ENCODE measurements at regions of chr6 and their contacts with region 1.

Region 1: DNA sequence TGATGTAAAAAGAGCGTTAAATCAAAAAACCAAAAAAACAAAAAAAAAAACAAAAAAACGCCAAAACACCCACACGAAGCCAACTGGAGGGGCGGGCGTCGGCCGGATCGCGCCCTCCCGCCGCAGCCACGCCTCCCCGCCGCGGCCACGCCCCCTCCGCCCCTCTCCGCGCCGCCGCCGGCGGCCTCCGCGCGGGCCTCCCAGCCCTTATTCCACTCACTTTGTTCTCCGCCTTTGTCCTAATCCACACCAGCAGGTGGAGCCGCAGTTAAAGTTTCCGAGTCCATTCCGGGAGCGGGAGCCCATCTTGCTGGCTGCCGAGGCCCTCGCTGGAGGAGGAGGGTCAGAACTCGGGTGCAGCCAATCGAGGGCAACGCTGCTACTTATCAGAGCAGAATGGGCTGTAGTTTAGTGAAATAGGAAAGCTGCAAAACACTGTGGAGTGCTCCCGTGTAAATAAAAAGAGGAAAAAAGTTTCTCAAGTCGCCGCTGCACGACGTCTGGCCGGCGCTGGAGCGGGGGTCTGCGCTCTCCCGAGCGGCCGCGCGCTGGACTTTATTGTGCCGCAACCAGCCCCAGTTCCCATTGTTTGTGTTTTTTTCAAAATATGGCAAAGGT is at the start of gene ASF1A:
- DNase-seq: peak; percentile 98
- H3K4me3 ChIP-seq: peak within 1 kb of the TSS; percentile 64 to 99 (median 87)
- H3K27ac ChIP-seq: peak within 1 kb of the TSS; percentile 91
- H3K4me1 ChIP-seq: peaks cover 18% of the 10 kb centered on the region
- H3K27me3 ChIP-seq: no peaks in the 10 kb centered on the region
- CTCF ChIP-seq: peak; percentile 65 to 69
- POLR2A ChIP-seq: peak; percentile 89
- total RNA-seq, gene ASF1A: 38.4 TPM in 2 replicates

Region 2: GRCh38 chr6:117498159-117498558 is 1395.8 kb before region 1 on chr6:
- CTCF ChIA-PET with region 1: no interaction called
- POLR2A ChIA-PET with region 1: no interaction called
- dilution Hi-C with region 1: no loop called
- intact Hi-C with region 1: loop called (anchors 10 kb)
- DNase-seq: peak; percentile 88
- H3K4me3 ChIP-seq: no peak overlapping the region
- H3K27ac ChIP-seq: peak overlapping the region; percentile 99
- H3K4me1 ChIP-seq: peaks cover 74% of the 10 kb centered on the region
- H3K27me3 ChIP-seq: no peaks in the 10 kb centered on the region
- CTCF ChIP-seq: no peak
- POLR2A ChIP-seq: peak; percentile 51

Region 3: GRCh38 chr6:118228886-118229285 is 665.0 kb before region 1 on chr6:
- CTCF ChIA-PET with region 1: no interaction called
- POLR2A ChIA-PET with region 1: no interaction called
- dilution Hi-C with region 1: no loop called
- intact Hi-C with region 1: no loop called
- DNase-seq: no peak
- H3K4me3 ChIP-seq: no peak overlapping the region
- H3K27ac ChIP-seq: no peak overlapping the region
- H3K4me1 ChIP-seq: no peaks in the 10 kb centered on the region
- H3K27me3 ChIP-seq: no peaks in the 10 kb centered on the region
- CTCF ChIP-seq: no peak
- POLR2A ChIP-seq: no peak

Region 4: GRCh38 chr6:118651282-118652050 is 242.4 kb before region 1 on chr6 and contains the start of gene CEP85L:
- CTCF ChIA-PET with region 1: interaction called, 4 read pairs
- POLR2A ChIA-PET with region 1: no interaction called
- dilution Hi-C with region 1: no loop called
- intact Hi-C with region 1: loop called (anchors 2 kb)
- DNase-seq: peak; percentile 90
- H3K4me3 ChIP-seq: peak within 1 kb of the TSS; percentile 57 to 98 (median 93)
- H3K27ac ChIP-seq: peak within 1 kb of the TSS; percentile 95
- H3K4me1 ChIP-seq: peaks cover 21% of the 10 kb centered on the region
- H3K27me3 ChIP-seq: no peaks in the 10 kb centered on the region
- CTCF ChIP-seq: no peak
- POLR2A ChIP-seq: peak; percentile 84
- total RNA-seq, gene CEP85L: 9.2 and 12.0 TPM in 2 replicates

Region 5: GRCh38 chr6:118709859-118710350 is 184.0 kb before region 1 on chr6:
- CTCF ChIA-PET with region 1: no interaction called
- POLR2A ChIA-PET with region 1: no interaction called
- dilution Hi-C with region 1: no loop called
- intact Hi-C with region 1: loop called (anchors 1 kb)
- DNase-seq: no peak
- H3K4me3 ChIP-seq: peak overlapping the region in 2 of 3 experiments; percentile 7 to 31
- H3K27ac ChIP-seq: peak overlapping the region; percentile 93
- H3K4me1 ChIP-seq: peaks cover 27% of the 10 kb centered on the region
- H3K27me3 ChIP-seq: no peaks in the 10 kb centered on the region
- CTCF ChIP-seq: no peak
- POLR2A ChIP-seq: no peak

Region 6: DNA sequence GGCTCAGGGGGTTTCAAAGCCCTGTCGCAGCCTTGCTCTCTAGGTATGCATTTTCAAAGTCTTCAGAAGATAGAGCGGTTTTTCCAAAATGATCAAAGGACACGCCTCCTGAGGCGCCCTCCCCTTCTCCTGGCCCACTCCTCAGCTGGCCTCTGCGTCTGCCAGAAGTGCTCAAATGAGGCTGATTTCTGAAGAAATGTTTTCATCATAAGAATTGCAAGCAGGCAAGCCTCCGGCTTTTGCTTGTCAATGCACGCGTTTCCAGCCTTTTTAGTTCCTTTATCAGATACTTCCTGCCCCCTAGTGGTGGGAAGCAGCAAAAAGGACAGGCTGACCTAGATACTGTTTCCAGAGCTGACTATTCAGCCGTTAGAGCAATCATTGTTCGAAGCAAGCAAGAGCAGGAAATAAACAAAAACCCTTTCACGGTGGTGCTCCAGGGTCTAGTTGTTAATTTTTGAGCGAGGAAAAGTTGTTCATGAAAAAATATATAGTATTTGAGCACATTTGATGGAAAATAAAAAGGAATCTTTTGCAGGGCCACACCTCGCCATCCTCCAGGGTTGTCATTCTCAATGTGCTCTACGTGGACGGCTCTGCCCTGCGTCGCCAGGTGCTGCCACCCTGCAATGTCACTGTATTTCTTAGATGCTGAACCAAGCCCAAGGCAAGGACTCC is 93.4 kb before region 1 on chr6:
- CTCF ChIA-PET with region 1: interaction called, 9 read pairs
- POLR2A ChIA-PET with region 1: no interaction called
- dilution Hi-C with region 1: no loop called
- intact Hi-C with region 1: loop called (anchors 2 kb)
- DNase-seq: peak; percentile 76
- H3K4me3 ChIP-seq: no peak overlapping the region
- H3K27ac ChIP-seq: no peak overlapping the region
- H3K4me1 ChIP-seq: no peaks in the 10 kb centered on the region
- H3K27me3 ChIP-seq: no peaks in the 10 kb centered on the region
- CTCF ChIP-seq: peak; percentile 83 to 86
- POLR2A ChIP-seq: no peak

Region 7: GRCh38 chr6:118843685-118844390 is 50.1 kb before region 1 on chr6:
- CTCF ChIA-PET with region 1: no interaction called
- POLR2A ChIA-PET with region 1: no interaction called
- dilution Hi-C with region 1: no loop called
- intact Hi-C with region 1: no loop called
- DNase-seq: no peak
- H3K4me3 ChIP-seq: no peak overlapping the region
- H3K27ac ChIP-seq: no peak overlapping the region
- H3K4me1 ChIP-seq: no peaks in the 10 kb centered on the region
- H3K27me3 ChIP-seq: no peaks in the 10 kb centered on the region
- CTCF ChIP-seq: no peak
- POLR2A ChIP-seq: no peak

Region 8: DNA sequence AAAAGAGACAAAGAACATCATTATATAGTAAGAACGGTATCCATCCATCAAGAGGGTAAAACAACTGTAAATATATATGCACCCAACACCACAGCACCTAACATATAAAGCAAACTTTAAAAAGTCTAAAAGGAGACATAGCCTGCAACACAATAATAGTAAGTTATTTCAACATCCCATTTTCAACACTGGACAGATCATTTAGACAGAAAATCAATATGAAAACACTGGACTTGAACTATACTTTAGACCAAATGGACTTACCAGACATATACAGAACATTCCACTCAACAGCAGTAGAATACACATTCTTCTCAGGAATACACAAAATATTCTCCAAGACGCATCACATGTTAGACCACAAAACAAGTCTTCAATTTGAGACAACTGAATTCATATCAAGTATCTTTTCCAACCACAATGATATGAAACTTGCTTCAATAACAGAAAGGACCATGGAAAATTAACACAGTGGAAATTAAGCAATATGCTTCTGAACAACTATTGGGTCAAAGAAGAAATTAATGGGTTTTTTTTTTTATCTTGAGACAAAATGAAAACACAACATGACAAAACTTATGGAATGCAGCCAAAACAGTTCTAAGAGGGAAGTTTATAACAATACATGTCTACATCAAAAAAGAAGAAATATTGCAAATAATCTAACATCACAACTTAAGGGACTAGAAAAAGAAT is 23.9 kb before region 1 on chr6:
- CTCF ChIA-PET with region 1: interaction called, 4 read pairs
- POLR2A ChIA-PET with region 1: no interaction called
- dilution Hi-C with region 1: no loop called
- intact Hi-C with region 1: loop called (anchors 1 kb)
- DNase-seq: peak; percentile 85
- H3K4me3 ChIP-seq: no peak overlapping the region
- H3K27ac ChIP-seq: no peak overlapping the region
- H3K4me1 ChIP-seq: peaks cover 15% of the 10 kb centered on the region
- H3K27me3 ChIP-seq: no peaks in the 10 kb centered on the region
- CTCF ChIP-seq: no peak
- POLR2A ChIP-seq: no peak

Region 9: GRCh38 chr6:118934461-118935330 is 40.8 kb after region 1 on chr6 and contains the start of gene MCM9:
- CTCF ChIA-PET with region 1: interaction called, 7 read pairs
- POLR2A ChIA-PET with region 1: interaction called, 4 read pairs
- dilution Hi-C with region 1: no loop called
- intact Hi-C with region 1: loop called (anchors 1 kb)
- DNase-seq: peak; percentile 95
- H3K4me3 ChIP-seq: peak within 1 kb of the TSS; percentile 79 to 92 (median 80)
- H3K27ac ChIP-seq: peak within 1 kb of the TSS; percentile 85
- H3K4me1 ChIP-seq: peaks cover 10% of the 10 kb centered on the region
- H3K27me3 ChIP-seq: no peaks in the 10 kb centered on the region
- CTCF ChIP-seq: no peak
- POLR2A ChIP-seq: peak; percentile 66
- total RNA-seq, gene MCM9: 14.1 and 14.6 TPM in 2 replicates

Measured in endothelial cell of umbilical vein (primary cell).